ENCODE measurements at regions of chr22 and their contacts with region 1.

Region 1: DNA sequence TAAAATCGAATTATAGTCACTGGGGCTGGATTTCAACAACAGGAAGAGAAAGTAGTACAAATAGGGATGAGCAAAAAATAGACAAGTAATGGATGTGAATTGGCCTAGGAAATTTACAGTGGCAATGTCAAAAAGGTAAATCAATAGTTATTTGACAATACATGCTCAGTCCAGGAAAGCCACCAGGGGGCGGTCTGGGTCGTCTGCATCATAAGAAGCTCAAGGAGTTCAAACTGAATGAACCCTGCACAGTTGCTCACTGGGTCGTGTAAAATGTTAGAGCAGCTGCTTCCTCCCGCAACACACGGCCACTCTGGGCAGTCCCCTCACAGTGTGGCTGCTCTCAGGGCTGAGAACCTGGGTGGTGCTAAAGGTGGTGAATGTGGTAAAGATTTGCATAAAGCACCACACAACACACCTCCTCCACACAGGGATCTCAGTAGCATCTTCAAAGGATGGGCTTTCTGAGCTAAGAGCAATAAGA is 85.9 kb downstream of the ZNF280B start:
- DNase-seq: peak; percentile 77 to 92 (median 91)
- H3K4me3 ChIP-seq: no peak overlapping the region
- H3K27ac ChIP-seq: no peak overlapping the region
- H3K4me1 ChIP-seq: no peaks in the 10 kb centered on the region
- H3K27me3 ChIP-seq: peaks cover 9 to 40% (median 22%) of the 10 kb centered on the region in 5 experiments

Region 2: DNA sequence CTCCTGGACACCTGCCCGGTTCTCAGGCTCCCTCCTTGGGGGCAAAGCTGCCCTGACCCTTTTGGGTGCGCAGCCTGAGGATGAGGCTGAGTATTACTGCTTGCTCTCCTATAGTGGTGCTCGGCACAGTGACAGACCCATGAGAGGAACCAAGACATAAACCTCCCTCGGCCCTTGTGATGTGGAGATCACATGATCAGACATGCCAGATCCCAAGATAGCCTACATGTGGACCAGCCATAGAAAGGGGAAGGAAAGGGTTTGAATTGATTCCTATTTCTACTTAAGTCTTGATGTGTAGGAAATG is 52.8 kb before region 1 on chr22:
- CTCF ChIA-PET with region 1: interaction called, 10 read pairs
- POLR2A ChIA-PET with region 1: no interaction called
- DNase-seq: peak in 2 of 3 donors; percentile 34 to 47
- H3K4me3 ChIP-seq: no peak overlapping the region
- H3K27ac ChIP-seq: no peak overlapping the region
- H3K4me1 ChIP-seq: peaks cover 15 to 35% (median 25%) of the 10 kb centered on the region in 4 experiments
- H3K27me3 ChIP-seq: no peaks in the 10 kb centered on the region

Region 3: GRCh38 chr22:22408731-22409696 is 13.7 kb before region 1 on chr22:
- CTCF ChIA-PET with region 1: interaction called, 13 read pairs
- POLR2A ChIA-PET with region 1: no interaction called
- DNase-seq: peak in 2 of 3 donors; percentile 37 to 51
- H3K4me3 ChIP-seq: no peak overlapping the region
- H3K27ac ChIP-seq: no peak overlapping the region
- H3K4me1 ChIP-seq: peaks cover 3 to 19% (median 17%) of the 10 kb centered on the region in 4 experiments
- H3K27me3 ChIP-seq: no peaks in the 10 kb centered on the region